Endothelial cell of umbilical vein (primary cell): ENCODE measurements at regions of chr13 and their contacts with region 1.

Region 1: DNA sequence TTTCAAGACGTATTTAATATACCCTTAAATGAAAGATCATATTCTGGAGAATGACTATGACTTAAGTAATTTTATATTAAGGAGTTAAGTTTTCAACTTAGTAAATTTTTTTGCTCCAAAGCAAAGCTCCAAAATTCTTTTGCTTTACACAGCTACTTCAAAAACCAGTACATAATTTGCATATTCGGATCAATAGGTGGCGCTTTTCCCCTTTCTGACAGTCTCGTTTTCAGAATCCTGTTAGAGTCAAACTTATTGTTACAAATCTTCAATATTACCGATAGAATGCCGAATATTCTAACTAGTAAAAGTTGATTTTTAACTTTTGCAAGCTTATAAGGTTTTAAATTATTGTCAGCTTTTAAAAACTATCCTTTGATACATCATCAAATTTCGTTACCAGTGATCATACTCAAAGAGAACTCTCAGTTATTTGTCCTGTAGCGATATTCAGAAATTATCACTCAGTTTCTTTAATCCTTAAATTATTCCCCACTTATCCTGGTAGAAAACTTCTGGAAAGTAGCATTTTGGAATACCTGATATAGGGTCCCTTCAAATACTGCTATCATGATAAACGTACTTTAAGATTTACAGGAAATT is 852.7 kb upstream of the KLHL1 start:
- DNase-seq: peak; percentile 65
- H3K4me3 ChIP-seq: no peak overlapping the region
- H3K27ac ChIP-seq: no peak overlapping the region
- H3K4me1 ChIP-seq: no peaks in the 10 kb centered on the region
- H3K27me3 ChIP-seq: no peaks in the 10 kb centered on the region
- CTCF ChIP-seq: peak; percentile 37 to 53
- POLR2A ChIP-seq: no peak

Region 2: DNA sequence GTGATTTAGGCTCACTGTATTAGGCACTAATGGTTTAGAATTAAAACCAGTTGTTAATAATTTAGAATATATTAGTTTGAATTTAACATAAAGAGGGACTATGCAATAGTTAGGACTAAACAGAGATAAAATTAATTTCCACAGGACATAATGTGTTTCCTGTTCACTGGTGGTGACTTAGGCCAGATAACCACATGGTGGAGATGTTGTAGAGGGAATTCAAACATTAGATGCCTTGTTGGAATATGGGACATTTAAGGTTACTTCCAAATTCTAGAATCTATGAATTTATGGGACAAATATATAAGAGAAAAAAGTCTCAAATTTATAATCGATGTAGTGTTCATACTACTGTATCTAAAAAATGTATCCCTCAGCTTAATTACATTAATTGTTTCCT is 237.2 kb before region 1 on chr13:
- CTCF ChIA-PET with region 1: interaction called, 8 read pairs
- POLR2A ChIA-PET with region 1: no interaction called
- dilution Hi-C with region 1: no loop called
- intact Hi-C with region 1: loop called (anchors 1 kb)
- DNase-seq: peak; percentile 62
- H3K4me3 ChIP-seq: no peak overlapping the region
- H3K27ac ChIP-seq: no peak overlapping the region
- H3K4me1 ChIP-seq: no peaks in the 10 kb centered on the region
- H3K27me3 ChIP-seq: no peaks in the 10 kb centered on the region
- CTCF ChIP-seq: peak in 1 of 2 donors; percentile 28
- POLR2A ChIP-seq: no peak

Region 3: DNA sequence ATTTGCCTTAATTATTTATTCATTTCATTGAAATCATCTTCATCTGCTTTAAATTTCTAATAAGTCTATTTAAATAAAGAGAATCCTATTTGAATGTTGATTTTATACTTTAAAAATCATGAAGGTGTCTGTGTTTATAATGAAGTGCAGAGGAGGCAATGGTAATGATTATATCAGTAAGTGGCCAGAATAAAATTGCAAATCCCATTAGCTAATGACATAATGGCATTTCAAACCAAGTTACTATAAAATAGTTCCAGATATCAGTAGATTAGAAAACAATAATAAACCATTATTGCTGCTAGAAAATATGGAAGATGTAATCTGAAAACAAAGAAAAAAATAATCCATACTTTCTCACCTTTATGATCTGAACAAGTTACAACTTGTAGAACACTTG is 204.9 kb before region 1 on chr13:
- CTCF ChIA-PET with region 1: no interaction called
- POLR2A ChIA-PET with region 1: no interaction called
- dilution Hi-C with region 1: no loop called
- intact Hi-C with region 1: no loop called
- DNase-seq: no peak
- H3K4me3 ChIP-seq: no peak overlapping the region
- H3K27ac ChIP-seq: no peak overlapping the region
- H3K4me1 ChIP-seq: no peaks in the 10 kb centered on the region
- H3K27me3 ChIP-seq: no peaks in the 10 kb centered on the region
- CTCF ChIP-seq: no peak
- POLR2A ChIP-seq: no peak

Region 4: GRCh38 chr13:71213252-71213821 is 252.4 kb after region 1 on chr13:
- CTCF ChIA-PET with region 1: no interaction called
- POLR2A ChIA-PET with region 1: no interaction called
- dilution Hi-C with region 1: no loop called
- intact Hi-C with region 1: loop called (anchors 5 kb)
- DNase-seq: no peak
- H3K4me3 ChIP-seq: no peak overlapping the region
- H3K27ac ChIP-seq: no peak overlapping the region
- H3K4me1 ChIP-seq: no peaks in the 10 kb centered on the region
- H3K27me3 ChIP-seq: no peaks in the 10 kb centered on the region
- CTCF ChIP-seq: no peak
- POLR2A ChIP-seq: no peak

Region 5: DNA sequence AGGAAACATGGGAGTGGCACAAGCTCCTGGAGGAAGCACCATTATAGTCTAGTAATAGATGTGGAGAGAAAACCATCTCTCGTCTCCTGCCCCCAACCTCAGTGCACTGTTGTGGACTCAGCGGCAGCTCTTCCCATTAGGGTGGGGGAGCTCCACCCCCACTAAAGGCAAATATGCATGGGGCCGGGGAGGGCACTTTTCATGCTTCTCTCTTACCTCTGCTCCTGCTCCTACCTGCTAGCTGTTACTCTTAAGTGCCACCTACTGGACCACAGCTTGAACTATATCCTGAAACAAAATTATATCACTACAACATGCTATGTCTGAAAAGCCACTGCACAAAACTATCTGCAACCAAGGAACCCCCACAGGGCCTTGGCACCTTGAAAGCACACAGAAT is 1018.7 kb after region 1 on chr13:
- CTCF ChIA-PET with region 1: interaction called, 19 read pairs
- POLR2A ChIA-PET with region 1: no interaction called
- dilution Hi-C with region 1: no loop called
- intact Hi-C with region 1: no loop called
- DNase-seq: peak; percentile 33
- H3K4me3 ChIP-seq: no peak overlapping the region
- H3K27ac ChIP-seq: no peak overlapping the region
- H3K4me1 ChIP-seq: no peaks in the 10 kb centered on the region
- H3K27me3 ChIP-seq: no peaks in the 10 kb centered on the region
- CTCF ChIP-seq: peak; percentile 13 to 43
- POLR2A ChIP-seq: no peak

Region 6: GRCh38 chr13:72565893-72566292 is 1605.0 kb after region 1 on chr13:
- CTCF ChIA-PET with region 1: interaction called, 18 read pairs
- POLR2A ChIA-PET with region 1: no interaction called
- dilution Hi-C with region 1: no loop called
- intact Hi-C with region 1: loop called (anchors 10 kb)
- DNase-seq: peak; percentile 25
- H3K4me3 ChIP-seq: no peak overlapping the region
- H3K27ac ChIP-seq: no peak overlapping the region
- H3K4me1 ChIP-seq: no peaks in the 10 kb centered on the region
- H3K27me3 ChIP-seq: no peaks in the 10 kb centered on the region
- CTCF ChIP-seq: peak; percentile 28 to 37
- POLR2A ChIP-seq: no peak